ENCODE measurements at regions of chr20 and their contacts with region 1.

Region 1: DNA sequence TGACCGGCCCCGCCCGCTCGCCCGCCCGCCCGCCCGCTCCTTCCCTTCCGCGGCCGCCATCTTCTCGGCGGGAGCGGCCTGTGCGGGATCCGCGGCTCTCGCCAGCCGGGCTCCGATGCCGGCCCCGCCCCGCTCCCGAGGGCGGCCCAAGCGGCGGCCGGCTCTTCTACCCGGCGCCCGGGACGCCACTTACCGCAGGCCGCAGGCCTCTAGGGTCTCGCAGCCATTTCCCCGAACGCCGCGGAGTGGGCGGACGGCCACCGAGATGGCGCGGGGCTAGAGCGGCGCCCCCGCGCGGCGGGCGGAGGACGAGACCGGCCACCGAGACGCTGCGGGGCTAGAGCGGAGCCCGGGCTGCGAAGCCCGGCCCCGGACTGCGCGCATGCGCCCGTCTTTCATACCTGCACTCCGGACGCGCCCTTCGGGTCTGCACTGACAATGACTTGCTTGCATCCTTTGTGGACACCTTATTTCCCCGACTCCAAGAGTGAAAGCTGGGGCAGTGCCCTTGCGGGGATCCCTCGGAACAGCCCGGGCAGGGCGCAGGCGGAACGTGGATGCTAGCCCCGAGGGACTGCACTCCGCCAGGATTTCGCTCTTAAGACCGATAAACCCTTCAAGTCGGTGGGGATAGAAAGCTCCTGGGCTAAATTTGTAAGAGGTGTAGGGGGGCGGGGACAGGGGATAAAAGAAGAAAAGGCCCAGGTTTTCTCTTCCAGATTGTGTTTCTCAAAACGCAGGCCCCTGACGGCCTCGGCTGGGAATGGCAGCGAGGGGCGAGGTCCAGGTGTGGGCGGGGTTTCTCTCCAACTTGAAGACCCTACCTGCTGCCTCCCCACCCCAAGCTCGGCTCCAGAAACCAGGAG is at the start of gene DIDO1:
- DNase-seq: peak; percentile 93
- H3K4me3 Mint-ChIP-seq: peak within 1 kb of the TSS; percentile 89
- H3K27ac Mint-ChIP-seq: peak within 1 kb of the TSS; percentile 93
- H3K4me1 Mint-ChIP-seq: peaks cover 64% of the 10 kb centered on the region
- H3K27me3 Mint-ChIP-seq: no peaks in the 10 kb centered on the region
- total RNA-seq, gene DIDO1: 46.6 to 48.4 TPM

Region 2: GRCh38 chr20:62642040-62642665 is 284.3 kb before region 1 on chr20 and contains the start of gene SLCO4A1:
- CTCF ChIA-PET with region 1: no interaction called
- POLR2A ChIA-PET with region 1: no interaction called
- intact Hi-C with region 1: loop called (anchors 10 kb)
- DNase-seq: peak; percentile 90
- H3K4me3 Mint-ChIP-seq: peak within 1 kb of the TSS; percentile 77
- H3K27ac Mint-ChIP-seq: peak within 1 kb of the TSS; percentile 67
- H3K4me1 Mint-ChIP-seq: no peaks in the 10 kb centered on the region
- H3K27me3 Mint-ChIP-seq: no peaks in the 10 kb centered on the region
- total RNA-seq, gene SLCO4A1: 29.6 to 30.7 TPM

Region 3: DNA sequence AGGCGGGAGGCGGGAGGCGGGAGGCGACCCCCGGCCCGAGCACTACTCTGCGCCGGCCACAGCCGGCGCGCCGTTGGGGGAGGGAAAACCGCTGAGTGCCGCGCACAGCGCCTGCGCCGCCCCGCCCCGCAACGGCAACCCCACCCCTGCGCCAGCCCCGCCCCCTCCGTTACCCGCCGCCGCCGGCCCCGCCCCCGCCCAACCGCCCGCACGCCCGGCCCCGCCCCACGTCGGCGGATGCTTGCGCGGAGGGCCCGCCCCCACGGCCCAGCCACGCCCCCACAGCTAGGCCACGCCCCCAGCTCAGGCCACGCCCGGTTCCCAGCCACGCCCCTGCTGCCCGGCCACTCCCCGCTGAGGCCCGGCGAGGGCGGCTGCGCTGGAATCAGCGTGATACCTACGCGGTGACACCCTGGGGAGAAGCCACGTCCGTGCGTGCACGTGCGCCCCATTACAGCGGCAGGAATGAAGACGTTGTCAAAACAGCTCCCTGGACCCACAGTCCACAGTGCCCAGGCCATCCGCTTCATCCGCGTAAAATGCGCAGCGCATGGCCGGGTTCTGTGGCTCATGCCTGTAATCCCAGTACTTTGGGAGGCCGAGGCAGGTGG is 64.6 kb before region 1 on chr20 and contains the start of gene TCFL5:
- CTCF ChIA-PET with region 1: no interaction called
- POLR2A ChIA-PET with region 1: interaction called, 5 read pairs
- intact Hi-C with region 1: loop called (anchors 5 kb)
- DNase-seq: peak; percentile 95
- H3K4me3 Mint-ChIP-seq: peak within 1 kb of the TSS; percentile 60
- H3K27ac Mint-ChIP-seq: no peak within 1 kb of the TSS
- H3K4me1 Mint-ChIP-seq: peaks cover 16% of the 10 kb centered on the region
- H3K27me3 Mint-ChIP-seq: no peaks in the 10 kb centered on the region
- total RNA-seq, gene TCFL5: 4.7 to 5.0 TPM

Region 4: GRCh38 chr20:62937366-62938104 is 11.1 kb after region 1 on chr20:
- CTCF ChIA-PET with region 1: interaction called, 9 read pairs
- POLR2A ChIA-PET with region 1: interaction called, 36 read pairs
- intact Hi-C with region 1: loop called (anchors 1 kb)
- DNase-seq: peak; percentile 98
- H3K4me3 Mint-ChIP-seq: no peak overlapping the region
- H3K27ac Mint-ChIP-seq: peak overlapping the region; percentile 96
- H3K4me1 Mint-ChIP-seq: peaks cover 37% of the 10 kb centered on the region
- H3K27me3 Mint-ChIP-seq: no peaks in the 10 kb centered on the region

Region 5: DNA sequence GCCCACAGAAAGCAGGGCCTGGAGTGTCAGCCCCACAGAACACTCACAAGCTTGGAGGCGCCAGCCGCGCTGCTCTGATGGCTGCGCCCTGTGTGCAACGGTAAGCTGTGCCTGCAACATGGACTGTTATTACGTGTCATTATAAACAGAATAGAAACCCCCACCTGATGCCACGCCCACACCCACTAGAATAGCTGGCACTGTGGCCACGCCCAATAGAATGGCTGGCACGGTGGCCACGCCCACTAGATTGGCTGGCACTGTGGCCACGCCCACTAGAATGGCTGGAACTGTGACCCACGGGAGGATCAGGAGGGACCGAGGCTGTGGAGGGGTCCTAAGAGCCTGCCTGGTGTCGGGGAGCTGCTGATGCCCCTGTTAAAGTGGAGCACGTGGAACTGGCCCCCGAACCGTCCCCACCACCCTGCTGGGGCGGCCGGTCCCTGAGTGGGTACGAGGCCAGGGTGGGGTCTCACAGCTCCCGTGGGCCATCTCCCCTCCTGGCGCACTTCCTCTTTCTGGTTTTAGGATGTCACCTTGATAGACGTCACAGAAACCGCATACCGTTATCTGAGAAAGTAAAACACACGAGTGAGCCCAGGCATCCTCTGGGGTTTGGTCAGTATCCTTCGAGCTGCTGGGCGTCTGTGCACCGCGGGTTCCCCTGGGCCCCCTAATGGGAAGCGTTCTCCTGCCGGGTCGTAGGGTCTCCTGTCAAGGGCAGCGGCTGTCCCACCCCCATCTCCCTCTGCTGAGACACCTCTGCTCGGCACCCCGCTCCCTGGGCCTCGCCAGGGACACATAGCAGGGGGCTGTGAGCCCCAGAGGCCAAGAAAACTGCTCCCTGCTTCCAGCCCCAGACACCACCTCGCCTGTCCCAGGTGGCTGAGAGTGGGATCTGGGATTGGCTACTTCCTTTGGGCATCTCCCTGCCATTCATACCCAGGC is 51.4 kb after region 1 on chr20:
- CTCF ChIA-PET with region 1: no interaction called
- POLR2A ChIA-PET with region 1: no interaction called
- intact Hi-C with region 1: loop called (anchors 2 kb)
- DNase-seq: peak; percentile 88
- H3K4me3 Mint-ChIP-seq: peak overlapping the region; percentile 12
- H3K27ac Mint-ChIP-seq: no peak overlapping the region
- H3K4me1 Mint-ChIP-seq: peaks cover 40% of the 10 kb centered on the region
- H3K27me3 Mint-ChIP-seq: peaks cover 58% of the 10 kb centered on the region

Region 6: GRCh38 chr20:63014710-63015109 is 88.2 kb after region 1 on chr20:
- CTCF ChIA-PET with region 1: no interaction called
- POLR2A ChIA-PET with region 1: no interaction called
- intact Hi-C with region 1: no loop called
- DNase-seq: no peak
- H3K4me3 Mint-ChIP-seq: no peak overlapping the region
- H3K27ac Mint-ChIP-seq: no peak overlapping the region
- H3K4me1 Mint-ChIP-seq: peaks cover 10% of the 10 kb centered on the region
- H3K27me3 Mint-ChIP-seq: peaks cover 45% of the 10 kb centered on the region

Region 7: GRCh38 chr20:63101781-63102719 is 175.6 kb after region 1 on chr20:
- CTCF ChIA-PET with region 1: no interaction called
- POLR2A ChIA-PET with region 1: no interaction called
- intact Hi-C with region 1: loop called (anchors 5 kb)
- DNase-seq: peak; percentile 80
- H3K4me3 Mint-ChIP-seq: peak overlapping the region; percentile 77
- H3K27ac Mint-ChIP-seq: peak overlapping the region; percentile 72
- H3K4me1 Mint-ChIP-seq: peaks cover 6% of the 10 kb centered on the region
- H3K27me3 Mint-ChIP-seq: no peaks in the 10 kb centered on the region